CD14-positive monocyte (primary cell): ENCODE measurements at regions of chr19 and their contacts with region 1.

Region 1: GRCh38 chr19:11587302-11587974 is 9.8 kb upstream of the ZNF627 start:
- DNase-seq: peak; percentile 72 to 81 (median 78)
- H3K4me3 ChIP-seq: no peak overlapping the region
- H3K4me3 Mint-ChIP-seq: no peak overlapping the region
- H3K27ac ChIP-seq: no peak overlapping the region
- H3K27ac Mint-ChIP-seq: peak overlapping the region in 5 of 7 donors; percentile 30 to 70 (median 65)
- H3K4me1 ChIP-seq: peaks cover 28 to 53% of the 10 kb centered on the region in 2 donors
- H3K4me1 Mint-ChIP-seq: peaks cover 42% of the 10 kb centered on the region
- H3K27me3 ChIP-seq: no peaks in the 10 kb centered on the region
- H3K27me3 Mint-ChIP-seq: peaks cover 2 to 4% (median 2%) of the 10 kb centered on the region in 3 donors
- CTCF ChIP-seq: peak; percentile 86

Region 2: DNA sequence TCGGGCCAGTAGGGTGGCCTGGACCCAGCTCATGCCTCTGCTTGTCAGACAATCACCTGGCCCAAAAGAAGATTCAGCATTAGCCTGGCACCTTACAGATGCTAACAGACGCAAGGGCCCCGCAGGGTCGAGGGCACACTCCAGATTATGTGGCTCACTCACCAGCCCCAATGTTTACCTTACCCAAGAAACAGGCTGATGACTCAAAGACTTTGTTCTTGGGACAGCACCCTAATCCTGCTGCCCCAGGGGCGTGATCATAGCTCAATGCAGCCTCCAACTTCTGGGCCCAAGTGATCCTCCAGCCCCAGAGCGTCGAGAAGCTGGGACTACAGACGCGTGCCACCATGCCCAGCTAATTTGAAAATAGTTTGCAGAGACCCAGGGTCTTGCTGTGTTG is 68.3 kb before region 1 on chr19:
- intact Hi-C with region 1: no loop called
- DNase-seq: no peak
- H3K4me3 ChIP-seq: no peak overlapping the region
- H3K4me3 Mint-ChIP-seq: no peak overlapping the region
- H3K27ac ChIP-seq: no peak overlapping the region
- H3K27ac Mint-ChIP-seq: no peak overlapping the region
- H3K4me1 ChIP-seq: no peaks in the 10 kb centered on the region
- H3K4me1 Mint-ChIP-seq: no peaks in the 10 kb centered on the region
- H3K27me3 ChIP-seq: no peaks in the 10 kb centered on the region
- H3K27me3 Mint-ChIP-seq: peaks cover 0 to 6% (median 1%) of the 10 kb centered on the region in 3 donors
- CTCF ChIP-seq: no peak

Region 3: DNA sequence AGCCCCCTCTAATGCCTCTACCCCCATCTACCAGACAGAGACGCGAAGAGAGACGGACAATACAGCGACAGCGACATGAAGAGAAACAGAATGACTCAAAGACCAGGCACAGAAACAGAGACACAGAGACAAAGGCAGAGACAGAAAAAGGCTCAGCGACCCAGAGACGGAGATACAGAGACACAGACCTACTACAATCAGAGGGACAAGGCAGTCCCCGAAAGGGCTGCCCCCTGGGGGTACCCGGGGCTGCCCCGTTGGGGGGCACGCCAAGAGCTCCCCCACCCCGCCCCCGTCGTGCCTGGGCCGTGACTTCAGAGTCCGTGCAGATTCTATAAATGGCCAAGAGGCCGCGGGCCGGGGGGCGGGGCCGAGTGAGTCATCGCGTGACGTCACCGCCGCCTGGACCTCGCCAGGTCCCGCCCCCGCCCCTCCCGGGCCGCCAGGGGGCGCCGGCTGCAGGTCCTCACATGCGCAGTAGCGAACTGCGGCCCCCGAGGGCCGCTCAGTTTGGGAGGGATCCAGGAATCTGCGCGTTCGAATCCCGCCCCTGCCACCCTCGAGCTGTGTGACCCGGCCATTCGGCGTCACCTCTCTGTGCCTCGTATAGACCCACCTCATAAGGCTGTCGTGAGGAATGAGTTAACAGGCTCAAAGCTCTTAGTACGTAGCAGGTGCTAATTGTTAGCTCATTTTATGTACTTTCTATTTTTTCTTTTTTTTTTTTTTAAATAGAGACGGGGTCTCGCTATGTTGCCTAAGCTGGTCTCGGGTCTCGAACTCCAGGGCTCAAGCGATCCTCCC is 51.4 kb before region 1 on chr19:
- intact Hi-C with region 1: loop called in 1 of 2 experiments (anchors 2 kb)
- DNase-seq: peak; percentile 83 to 91 (median 83)
- H3K4me3 ChIP-seq: peak overlapping the region in 1 of 3 experiments; percentile 58
- H3K4me3 Mint-ChIP-seq: peak overlapping the region; percentile 49 to 79
- H3K27ac ChIP-seq: peak overlapping the region; percentile 39 to 78
- H3K27ac Mint-ChIP-seq: peak overlapping the region; percentile 84 to 94 (median 91)
- H3K4me1 ChIP-seq: peaks cover 17 to 22% of the 10 kb centered on the region in 2 donors
- H3K4me1 Mint-ChIP-seq: peaks cover 21% of the 10 kb centered on the region
- H3K27me3 ChIP-seq: peaks cover 12 to 32% of the 10 kb centered on the region in 2 donors
- H3K27me3 Mint-ChIP-seq: peaks cover 24 to 36% (median 29%) of the 10 kb centered on the region in 3 donors
- CTCF ChIP-seq: peak; percentile 93

Region 4: GRCh38 chr19:11570039-11570462 is 17.4 kb before region 1 on chr19:
- intact Hi-C with region 1: loop called in 1 of 2 experiments (anchors 1 kb)
- DNase-seq: peak in 1 of 3 donors; percentile 45
- H3K4me3 ChIP-seq: no peak overlapping the region
- H3K4me3 Mint-ChIP-seq: no peak overlapping the region
- H3K27ac ChIP-seq: peak overlapping the region in 1 of 2 donors; percentile 4
- H3K27ac Mint-ChIP-seq: peak overlapping the region in 6 of 7 donors; percentile 25 to 93 (median 74)
- H3K4me1 ChIP-seq: peaks cover 22 to 30% of the 10 kb centered on the region in 2 donors
- H3K4me1 Mint-ChIP-seq: peaks cover 43% of the 10 kb centered on the region
- H3K27me3 ChIP-seq: no peaks in the 10 kb centered on the region
- H3K27me3 Mint-ChIP-seq: peaks cover 2 to 4% (median 2%) of the 10 kb centered on the region in 3 donors
- CTCF ChIP-seq: no peak